ENCODE measurements at regions of chr16 and their contacts with region 1.

Region 1: GRCh38 chr16:11356573-11357331 is 11.5 kb downstream of the RMI2 start:
- DNase-seq: peak; percentile 63
- H3K4me3 Mint-ChIP-seq: no peak overlapping the region
- H3K27ac Mint-ChIP-seq: no peak overlapping the region
- H3K4me1 Mint-ChIP-seq: peaks cover 60% of the 10 kb centered on the region
- H3K27me3 Mint-ChIP-seq: peaks cover 56% of the 10 kb centered on the region

Region 2: DNA sequence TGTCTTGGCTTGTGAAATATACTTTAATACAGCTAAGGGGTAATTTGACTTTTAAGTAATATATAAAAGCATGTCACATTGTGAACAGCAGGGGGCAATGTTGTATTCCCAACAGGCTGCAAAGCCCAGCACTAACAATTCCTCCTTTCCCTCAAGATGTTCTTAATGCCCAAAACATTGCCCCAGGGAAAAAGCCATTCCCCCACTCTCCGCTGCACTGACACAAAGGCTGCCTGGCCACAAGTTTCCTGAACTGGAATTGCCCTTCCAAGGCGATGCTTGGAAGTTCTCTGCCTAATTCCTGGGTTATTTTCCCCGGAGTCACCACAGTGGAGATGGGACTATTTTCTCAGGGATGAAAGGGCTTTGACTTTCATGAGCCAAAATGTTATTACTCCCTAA is 385.2 kb before region 1 on chr16:
- CTCF ChIA-PET with region 1: interaction called, 15 read pairs
- POLR2A ChIA-PET with region 1: interaction called, 3 read pairs
- DNase-seq: peak; percentile 50
- H3K4me3 Mint-ChIP-seq: no peak overlapping the region
- H3K27ac Mint-ChIP-seq: peak overlapping the region; percentile 82
- H3K4me1 Mint-ChIP-seq: peaks cover 74% of the 10 kb centered on the region
- H3K27me3 Mint-ChIP-seq: no peaks in the 10 kb centered on the region

Region 3: GRCh38 chr16:11058832-11059231 is 297.9 kb before region 1 on chr16:
- CTCF ChIA-PET with region 1: no interaction called
- POLR2A ChIA-PET with region 1: no interaction called
- DNase-seq: no peak
- H3K4me3 Mint-ChIP-seq: no peak overlapping the region
- H3K27ac Mint-ChIP-seq: no peak overlapping the region
- H3K4me1 Mint-ChIP-seq: peaks cover 53% of the 10 kb centered on the region
- H3K27me3 Mint-ChIP-seq: no peaks in the 10 kb centered on the region

Region 4: DNA sequence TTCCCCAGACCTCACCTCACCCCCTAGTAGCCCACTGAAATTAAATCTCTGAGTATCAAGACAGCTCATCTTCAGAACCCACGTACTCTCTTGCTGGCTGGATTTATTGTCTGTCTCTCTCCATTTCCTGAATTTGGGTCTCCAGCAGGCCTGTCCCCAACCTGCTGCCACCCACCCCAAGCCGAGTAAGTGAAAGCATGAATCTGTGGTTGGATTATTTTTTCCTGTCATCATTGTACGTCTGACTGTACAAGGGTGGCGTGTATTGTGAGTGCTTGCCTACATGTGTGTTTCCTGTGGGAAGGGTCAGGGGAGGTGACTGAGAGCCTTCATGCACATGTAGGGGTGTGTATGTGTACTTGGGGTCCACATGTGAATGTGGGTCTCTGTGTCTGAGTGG is 93.0 kb before region 1 on chr16:
- CTCF ChIA-PET with region 1: interaction called, 44 read pairs
- POLR2A ChIA-PET with region 1: interaction called, 169 read pairs
- DNase-seq: peak; percentile 57
- H3K4me3 Mint-ChIP-seq: no peak overlapping the region
- H3K27ac Mint-ChIP-seq: peak overlapping the region; percentile 48
- H3K4me1 Mint-ChIP-seq: peaks cover 37% of the 10 kb centered on the region
- H3K27me3 Mint-ChIP-seq: peaks cover 37% of the 10 kb centered on the region

Region 5: DNA sequence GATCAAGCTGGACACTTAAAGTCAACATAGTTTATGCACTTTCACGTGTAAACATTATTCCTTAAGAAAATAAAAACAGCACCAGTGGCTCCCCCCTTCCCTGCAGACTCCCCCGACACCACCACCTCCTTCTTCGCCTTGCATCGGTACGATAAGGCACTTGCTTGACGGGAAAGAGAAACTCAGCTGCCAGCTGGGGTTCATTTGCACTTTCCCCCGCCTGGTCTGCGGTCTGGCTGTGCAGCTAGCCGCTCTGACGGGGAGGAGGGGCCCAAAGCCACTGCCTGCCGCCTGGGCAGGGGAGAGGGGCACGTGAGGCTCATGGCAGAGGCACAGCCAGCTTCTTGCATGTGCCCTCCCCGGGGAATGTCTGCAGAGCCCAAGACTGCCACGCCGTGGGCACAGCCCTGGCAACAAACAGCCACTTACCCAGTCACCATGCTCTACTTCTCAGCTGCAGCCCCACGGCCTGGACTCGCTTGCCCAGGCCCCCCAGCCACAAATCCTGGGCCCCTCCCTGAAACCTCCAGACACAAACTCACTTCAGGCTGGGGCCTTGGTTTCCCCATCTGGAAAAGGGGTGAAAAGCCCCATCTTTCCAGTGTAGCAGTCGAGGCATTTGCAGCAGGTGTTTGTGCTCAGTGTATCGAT is 59.1 kb before region 1 on chr16:
- CTCF ChIA-PET with region 1: interaction called, 13 read pairs
- POLR2A ChIA-PET with region 1: interaction called, 18 read pairs
- DNase-seq: peak; percentile 79
- H3K4me3 Mint-ChIP-seq: peak overlapping the region; percentile 4
- H3K27ac Mint-ChIP-seq: no peak overlapping the region
- H3K4me1 Mint-ChIP-seq: peaks cover 18% of the 10 kb centered on the region
- H3K27me3 Mint-ChIP-seq: peaks cover 38% of the 10 kb centered on the region

Region 6: DNA sequence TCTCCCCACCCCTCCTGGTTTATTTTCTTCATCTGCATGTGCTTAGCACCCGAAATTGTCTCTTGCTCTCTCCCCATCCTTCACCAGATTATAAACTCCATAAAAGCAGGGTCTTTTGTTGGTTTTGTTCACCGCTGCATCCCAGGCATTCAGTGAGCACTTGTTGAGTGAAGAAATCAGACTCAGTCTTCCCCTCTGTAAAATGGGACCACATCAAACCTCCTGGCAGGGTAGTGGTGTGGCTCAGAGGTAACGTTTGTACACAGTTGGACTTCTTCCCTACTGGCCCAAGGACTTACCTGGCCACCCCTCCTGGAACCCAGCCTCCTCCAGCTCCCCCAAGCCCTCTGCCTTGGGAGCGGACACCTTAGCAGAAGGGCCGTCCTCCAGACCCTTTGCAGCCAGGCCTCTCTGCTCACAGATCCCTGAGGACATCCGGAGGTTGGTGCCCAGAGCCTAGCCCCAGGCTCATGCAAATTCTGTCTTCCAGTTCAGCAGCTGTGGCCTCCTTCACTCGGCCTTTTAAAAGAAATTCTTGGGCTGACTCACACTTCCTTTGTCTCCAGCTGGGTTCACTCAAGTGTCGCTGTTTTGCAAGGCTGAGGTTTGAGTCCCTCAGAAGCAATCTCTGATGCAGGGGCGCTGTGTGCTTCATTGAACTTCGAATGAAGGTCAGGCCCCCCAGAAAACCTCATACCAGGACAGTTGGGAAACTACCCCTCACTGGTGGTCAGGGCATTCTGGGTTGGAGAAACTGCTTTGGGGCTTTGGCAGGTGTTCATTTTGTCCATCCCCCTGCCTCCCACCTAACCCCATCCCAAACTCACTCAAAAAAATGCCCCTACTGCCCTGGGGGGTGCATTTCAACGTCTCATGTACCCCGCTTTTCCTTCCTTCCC is 28.3 kb before region 1 on chr16:
- CTCF ChIA-PET with region 1: no interaction called
- POLR2A ChIA-PET with region 1: interaction called, 18 read pairs
- DNase-seq: peak; percentile 71
- H3K4me3 Mint-ChIP-seq: peak overlapping the region; percentile 64
- H3K27ac Mint-ChIP-seq: peak overlapping the region; percentile 74
- H3K4me1 Mint-ChIP-seq: peaks cover 52% of the 10 kb centered on the region
- H3K27me3 Mint-ChIP-seq: peaks cover 12% of the 10 kb centered on the region

Region 7: DNA sequence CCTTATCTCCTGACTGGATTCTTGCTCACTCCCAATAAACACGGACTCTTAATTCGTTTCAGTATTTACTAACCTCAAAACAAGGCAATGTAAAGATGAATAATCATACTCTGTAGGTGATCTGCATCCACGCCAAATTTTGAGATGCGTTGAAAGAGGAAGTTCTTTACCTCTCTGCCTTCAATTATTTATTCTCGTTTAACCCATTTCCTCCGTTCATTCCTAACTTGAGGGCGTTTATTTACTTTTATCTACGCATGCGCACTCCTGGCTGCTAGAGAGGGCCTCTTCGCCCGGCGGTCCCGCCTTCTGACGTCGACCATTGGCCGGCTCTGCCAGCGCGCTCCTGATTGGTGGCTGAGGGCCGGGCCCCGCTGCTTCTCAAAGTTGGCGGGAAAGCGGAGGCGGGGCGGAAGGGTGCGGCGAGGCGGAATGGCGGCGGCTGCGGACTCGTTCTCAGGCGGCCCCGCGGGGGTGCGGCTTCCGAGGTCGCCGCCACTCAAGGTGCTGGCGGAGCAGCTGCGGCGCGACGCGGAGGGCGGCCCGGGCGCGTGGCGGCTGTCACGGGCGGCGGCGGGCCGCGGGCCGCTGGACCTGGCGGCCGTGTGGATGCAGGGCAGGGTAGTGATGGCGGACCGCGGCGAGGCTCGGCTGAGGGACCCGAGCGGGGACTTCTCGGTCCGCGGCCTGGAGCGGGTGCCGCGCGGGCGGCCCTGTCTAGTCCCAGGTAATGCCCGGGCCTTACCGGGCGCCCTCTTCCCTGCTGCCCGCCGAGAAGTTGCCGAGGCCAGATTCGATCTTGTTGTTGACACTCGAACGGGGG is 11.5 kb before region 1 on chr16 and contains the start of gene RMI2:
- CTCF ChIA-PET with region 1: interaction called, 6 read pairs
- POLR2A ChIA-PET with region 1: interaction called, 14 read pairs
- DNase-seq: peak; percentile 98
- H3K4me3 Mint-ChIP-seq: peak within 1 kb of the TSS; percentile 89
- H3K27ac Mint-ChIP-seq: peak within 1 kb of the TSS; percentile 77
- H3K4me1 Mint-ChIP-seq: peaks cover 57% of the 10 kb centered on the region
- H3K27me3 Mint-ChIP-seq: no peaks in the 10 kb centered on the region
- total RNA-seq, gene RMI2: 45.9 to 46.6 TPM

Region 8: DNA sequence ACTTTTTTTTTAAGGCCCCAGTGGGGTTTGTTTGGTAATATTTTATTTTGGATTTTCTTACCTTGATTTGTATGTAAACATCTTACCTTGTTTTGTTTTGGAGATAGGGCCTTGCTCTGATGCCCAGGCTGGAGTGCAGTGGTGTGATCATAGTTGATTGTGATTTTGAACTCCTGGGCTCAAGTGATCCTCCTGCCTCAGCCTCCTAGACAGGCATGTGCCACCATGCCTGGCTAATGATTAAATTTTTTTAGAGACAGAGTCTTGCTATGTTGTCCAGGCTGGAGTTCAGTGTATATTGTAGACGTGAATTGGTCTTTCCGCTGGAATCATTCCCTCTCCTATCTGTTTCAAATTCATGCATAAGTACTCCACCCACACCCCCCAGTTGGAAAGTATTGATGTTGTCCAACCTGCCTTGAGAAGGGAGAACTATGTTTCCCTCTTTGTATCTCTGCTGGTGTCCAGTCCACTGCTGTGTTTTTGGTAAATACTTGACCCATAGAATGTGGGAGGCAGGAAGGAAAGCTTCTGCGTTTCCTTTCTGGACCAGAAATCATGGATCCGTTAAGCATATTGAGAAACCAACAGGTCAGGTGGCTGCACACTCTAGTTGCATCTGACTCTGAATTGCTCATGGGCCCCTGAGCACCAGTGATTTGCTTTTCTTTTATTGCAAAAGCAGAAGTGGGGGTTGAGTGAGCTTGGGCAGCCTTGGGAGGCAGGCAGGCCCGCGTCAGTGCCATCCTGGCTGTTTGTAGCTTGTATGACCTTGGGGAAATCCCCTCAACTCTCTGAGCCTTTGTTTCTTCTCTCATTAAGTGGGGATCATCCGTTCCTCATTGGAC is 13.6 kb after region 1 on chr16:
- CTCF ChIA-PET with region 1: interaction called, 12 read pairs
- POLR2A ChIA-PET with region 1: no interaction called
- DNase-seq: no peak
- H3K4me3 Mint-ChIP-seq: no peak overlapping the region
- H3K27ac Mint-ChIP-seq: peak overlapping the region; percentile 9
- H3K4me1 Mint-ChIP-seq: peaks cover 8% of the 10 kb centered on the region
- H3K27me3 Mint-ChIP-seq: peaks cover 9% of the 10 kb centered on the region

Region 9: DNA sequence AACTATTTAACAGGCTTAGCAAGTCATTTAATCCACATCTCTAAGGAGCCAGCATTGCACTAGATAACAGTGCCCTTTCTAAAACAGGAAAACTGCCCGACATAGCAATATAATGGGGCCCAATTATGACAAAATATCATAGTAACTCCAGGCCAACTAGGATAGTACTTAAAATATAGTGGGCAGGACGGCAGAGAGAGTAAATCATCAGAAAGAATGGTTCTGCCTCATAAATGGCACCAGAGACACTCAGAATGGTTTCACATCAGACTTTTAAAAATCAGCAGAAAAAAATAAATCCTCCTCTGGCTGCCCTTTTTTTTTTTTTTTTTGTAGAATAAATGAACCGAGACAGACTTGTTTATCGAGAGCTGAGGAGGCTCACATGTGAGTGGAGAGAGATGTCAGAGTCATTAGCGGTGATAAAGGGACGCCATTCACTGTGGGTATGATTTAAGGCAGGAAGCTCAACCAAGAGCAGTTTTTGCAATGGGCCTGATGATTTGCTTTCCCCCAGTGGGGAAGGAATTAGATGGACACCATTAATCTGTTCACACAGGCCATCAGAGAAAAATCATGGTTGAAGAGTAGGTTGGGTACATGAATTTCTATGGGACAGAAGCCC is 1384.3 kb after region 1 on chr16:
- CTCF ChIA-PET with region 1: no interaction called
- POLR2A ChIA-PET with region 1: no interaction called
- DNase-seq: no peak
- H3K4me3 Mint-ChIP-seq: no peak overlapping the region
- H3K27ac Mint-ChIP-seq: no peak overlapping the region
- H3K4me1 Mint-ChIP-seq: no peaks in the 10 kb centered on the region
- H3K27me3 Mint-ChIP-seq: no peaks in the 10 kb centered on the region